Endothelial cell of umbilical vein (primary cell): ENCODE measurements at regions of chr19 and their contacts with region 1.

Region 1: DNA sequence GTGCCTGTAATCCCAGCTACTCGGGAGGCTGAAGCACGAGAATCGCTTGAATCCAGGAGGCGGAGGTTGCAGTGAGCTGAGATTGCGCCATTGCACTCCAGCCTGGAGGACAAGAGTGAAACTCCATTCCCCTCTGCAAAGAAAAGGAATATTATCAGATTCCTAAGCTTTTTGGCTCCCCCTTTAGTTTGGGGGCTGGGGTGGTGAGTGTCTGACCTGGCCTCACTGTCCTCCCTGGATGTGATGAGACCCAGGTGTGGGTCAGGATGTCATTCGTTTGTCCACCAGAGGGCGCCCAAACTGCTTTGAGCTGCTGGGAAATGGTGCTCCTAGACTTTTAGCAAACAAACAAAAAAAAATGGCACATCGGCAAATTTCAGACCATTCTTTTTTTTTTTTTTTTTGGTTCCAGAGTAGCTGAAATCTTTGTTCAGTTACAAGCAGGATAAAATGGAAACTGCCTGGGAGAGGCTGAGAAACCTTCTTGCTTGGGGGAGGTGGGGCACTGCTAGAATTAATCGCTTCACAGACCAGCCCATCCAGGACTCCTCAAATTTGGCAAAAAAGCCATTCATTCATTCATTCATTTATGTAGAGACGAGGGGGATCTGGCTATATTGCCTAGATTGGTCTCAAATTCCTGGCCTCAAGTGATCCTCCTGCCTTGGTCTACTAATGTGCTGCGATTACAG is 29.4 kb downstream of the SPC24 start:
- DNase-seq: peak; percentile 68
- H3K4me3 ChIP-seq: no peak overlapping the region
- H3K27ac ChIP-seq: no peak overlapping the region
- H3K4me1 ChIP-seq: peaks cover 4% of the 10 kb centered on the region
- H3K27me3 ChIP-seq: no peaks in the 10 kb centered on the region
- CTCF ChIP-seq: peak; percentile 61 to 72
- POLR2A ChIP-seq: no peak

Region 2: GRCh38 chr19:11059511-11060358 is 66.4 kb before region 1 on chr19:
- CTCF ChIA-PET with region 1: no interaction called
- POLR2A ChIA-PET with region 1: no interaction called
- dilution Hi-C with region 1: no loop called
- intact Hi-C with region 1: no loop called
- DNase-seq: no peak
- H3K4me3 ChIP-seq: no peak overlapping the region
- H3K27ac ChIP-seq: no peak overlapping the region
- H3K4me1 ChIP-seq: no peaks in the 10 kb centered on the region
- H3K27me3 ChIP-seq: no peaks in the 10 kb centered on the region
- CTCF ChIP-seq: no peak
- POLR2A ChIP-seq: no peak

Region 3: GRCh38 chr19:11090054-11090900 is 35.9 kb before region 1 on chr19:
- CTCF ChIA-PET with region 1: interaction called, 12 read pairs
- POLR2A ChIA-PET with region 1: interaction called, 5 read pairs
- dilution Hi-C with region 1: no loop called
- intact Hi-C with region 1: no loop called
- DNase-seq: peak; percentile 91
- H3K4me3 ChIP-seq: peak overlapping the region; percentile 58 to 96 (median 68)
- H3K27ac ChIP-seq: peak overlapping the region; percentile 87
- H3K4me1 ChIP-seq: peaks cover 60% of the 10 kb centered on the region
- H3K27me3 ChIP-seq: no peaks in the 10 kb centered on the region
- CTCF ChIP-seq: no peak
- POLR2A ChIP-seq: peak; percentile 68

Region 4: DNA sequence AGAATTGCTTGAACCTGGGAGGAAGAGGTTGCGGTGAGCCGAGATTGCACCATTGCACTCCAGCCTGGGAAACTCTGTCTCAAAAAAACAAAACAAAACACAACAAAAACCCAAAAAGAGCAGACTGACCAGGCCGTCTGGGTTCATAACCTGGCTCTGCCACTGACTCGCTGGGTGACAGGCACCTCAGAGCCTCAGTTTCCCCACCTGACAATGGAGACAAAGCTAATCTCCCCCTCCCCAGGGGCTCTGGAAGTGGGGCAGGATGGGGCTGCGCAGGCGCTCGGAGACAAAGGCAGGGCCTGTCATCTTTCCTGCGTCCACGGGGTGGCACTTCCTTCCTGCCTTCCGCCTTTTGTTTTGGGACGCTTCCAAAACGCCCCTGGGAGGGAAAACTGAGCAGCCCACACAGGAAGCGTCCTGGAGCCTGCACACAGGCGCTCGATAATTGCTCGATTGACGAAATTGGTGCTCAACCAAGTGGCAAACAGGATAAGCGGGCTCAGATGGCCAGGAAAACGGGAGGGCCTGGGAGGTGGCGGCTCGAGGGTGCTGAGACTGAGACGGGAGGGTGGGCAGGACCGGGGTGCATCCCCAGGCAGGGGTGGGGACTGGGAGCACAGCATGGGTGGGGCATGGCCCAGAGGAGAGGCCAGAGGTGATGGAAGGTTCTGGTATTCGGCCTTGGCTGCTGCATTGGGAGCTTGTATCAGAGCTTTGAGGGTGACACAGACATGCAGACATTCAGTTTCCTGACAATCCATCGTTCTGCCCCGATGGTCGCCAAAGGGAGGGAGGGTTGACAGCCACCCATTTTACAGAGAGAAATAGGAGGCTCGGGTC is 11.6 kb after region 1 on chr19:
- CTCF ChIA-PET with region 1: interaction called, 13 read pairs
- POLR2A ChIA-PET with region 1: interaction called, 4 read pairs
- dilution Hi-C with region 1: no loop called
- intact Hi-C with region 1: no loop called
- DNase-seq: peak; percentile 53
- H3K4me3 ChIP-seq: no peak overlapping the region
- H3K27ac ChIP-seq: peak overlapping the region; percentile 22
- H3K4me1 ChIP-seq: peaks cover 36% of the 10 kb centered on the region
- H3K27me3 ChIP-seq: no peaks in the 10 kb centered on the region
- CTCF ChIP-seq: peak; percentile 28 to 43
- POLR2A ChIP-seq: peak; percentile 17

Region 5: GRCh38 chr19:11179716-11180297 is 53.7 kb after region 1 on chr19:
- CTCF ChIA-PET with region 1: interaction called, 12 read pairs
- POLR2A ChIA-PET with region 1: no interaction called
- dilution Hi-C with region 1: no loop called
- intact Hi-C with region 1: no loop called
- DNase-seq: peak; percentile 28
- H3K4me3 ChIP-seq: no peak overlapping the region
- H3K27ac ChIP-seq: peak overlapping the region; percentile 53
- H3K4me1 ChIP-seq: peaks cover 12% of the 10 kb centered on the region
- H3K27me3 ChIP-seq: no peaks in the 10 kb centered on the region
- CTCF ChIP-seq: no peak
- POLR2A ChIP-seq: no peak

Region 6: DNA sequence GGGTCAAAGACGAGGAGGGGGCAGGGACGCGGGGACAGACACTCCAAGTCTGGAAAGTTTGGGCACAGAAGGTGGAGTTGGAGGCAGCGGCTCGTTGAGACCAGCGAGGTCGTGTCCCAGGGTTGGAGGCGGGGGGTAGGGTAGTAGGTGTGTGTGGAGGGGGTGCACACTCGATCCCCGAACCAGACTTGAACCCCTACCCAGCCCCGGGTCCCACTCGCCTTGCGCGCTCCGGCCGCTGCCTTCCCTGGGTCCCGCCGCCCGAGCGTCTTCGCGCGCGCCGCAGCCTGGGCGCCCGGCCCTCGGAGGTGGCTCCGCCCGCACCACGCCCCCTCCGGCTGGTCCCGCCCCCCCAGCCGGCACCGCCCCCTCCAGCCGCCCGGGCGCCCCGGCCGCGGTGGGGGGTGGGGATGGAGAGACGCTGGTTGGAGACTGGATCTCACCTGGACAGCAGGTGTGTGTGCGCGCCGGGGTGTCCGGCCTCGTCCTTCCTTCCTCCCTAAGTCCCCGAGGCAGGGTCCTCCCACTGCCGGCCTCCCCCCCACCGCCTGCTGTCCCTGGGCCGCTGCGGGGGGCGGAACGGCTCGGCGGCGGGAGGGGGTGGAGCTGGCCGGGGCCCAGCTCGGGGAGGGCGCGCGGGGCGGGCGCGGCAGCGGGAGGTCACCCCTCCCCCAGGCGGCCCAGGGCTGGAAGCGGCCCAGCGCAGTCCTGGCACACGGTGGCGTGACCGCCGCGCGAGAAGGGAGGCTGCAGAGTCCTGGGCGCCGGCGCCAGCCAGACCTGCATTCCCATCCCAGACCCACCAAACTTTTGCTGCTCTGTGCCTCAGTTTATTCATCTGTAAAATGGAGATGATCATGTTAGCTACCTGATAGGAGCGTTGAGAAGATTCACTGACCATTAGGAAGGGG is 71.4 kb after region 1 on chr19 and contains the start of gene KANK2:
- CTCF ChIA-PET with region 1: interaction called, 116 read pairs
- POLR2A ChIA-PET with region 1: interaction called, 3 read pairs
- dilution Hi-C with region 1: no loop called
- intact Hi-C with region 1: no loop called
- DNase-seq: peak; percentile 71
- H3K4me3 ChIP-seq: peak within 1 kb of the TSS; percentile 52 to 87 (median 69)
- H3K27ac ChIP-seq: peak within 1 kb of the TSS; percentile 71
- H3K4me1 ChIP-seq: peaks cover 19% of the 10 kb centered on the region
- H3K27me3 ChIP-seq: no peaks in the 10 kb centered on the region
- CTCF ChIP-seq: no peak
- POLR2A ChIP-seq: peak; percentile 84
- total RNA-seq, gene KANK2: 77.9 and 78.0 TPM in 2 replicates